Activated CD4-positive, alpha-beta memory T cell treated with anti-CD3 and anti-CD28 coated beads for 36 hours (primary cell): ENCODE measurements at regions of chr14 and their contacts with region 1.

Region 1: DNA sequence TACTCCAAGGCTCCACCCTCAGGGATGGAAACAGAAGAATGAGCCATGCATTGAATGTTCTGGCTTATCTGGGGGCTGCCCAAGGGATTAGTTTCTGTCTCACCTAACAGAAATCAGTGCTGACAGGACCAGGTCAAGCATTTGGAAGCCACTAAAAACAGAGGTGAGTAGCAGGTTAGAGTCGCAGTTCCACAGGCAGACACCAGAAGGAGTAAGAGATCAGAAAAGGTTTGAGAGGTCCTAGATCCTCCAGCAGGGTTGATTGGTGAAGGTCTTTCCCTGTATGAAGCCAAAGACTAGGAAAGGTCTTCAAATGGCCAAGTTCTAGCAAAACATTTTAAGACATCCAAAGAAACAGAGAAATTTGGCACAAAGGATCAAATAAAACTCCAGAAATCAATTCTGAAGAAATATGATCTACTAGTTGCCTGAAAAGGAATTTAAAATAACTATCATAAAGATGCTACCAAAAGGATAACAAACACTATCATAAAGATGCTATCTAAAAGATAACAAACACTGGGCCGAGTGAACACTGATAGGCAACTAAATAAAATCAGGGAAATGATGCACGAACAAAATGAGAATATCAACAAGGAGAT is 19.5 kb upstream of the TTC9 start:
- DNase-seq: peak; percentile 61
- H3K4me3 Mint-ChIP-seq: no peak overlapping the region
- H3K27ac Mint-ChIP-seq: no peak overlapping the region
- H3K4me1 Mint-ChIP-seq: no peaks in the 10 kb centered on the region
- H3K27me3 Mint-ChIP-seq: no peaks in the 10 kb centered on the region

Region 2: DNA sequence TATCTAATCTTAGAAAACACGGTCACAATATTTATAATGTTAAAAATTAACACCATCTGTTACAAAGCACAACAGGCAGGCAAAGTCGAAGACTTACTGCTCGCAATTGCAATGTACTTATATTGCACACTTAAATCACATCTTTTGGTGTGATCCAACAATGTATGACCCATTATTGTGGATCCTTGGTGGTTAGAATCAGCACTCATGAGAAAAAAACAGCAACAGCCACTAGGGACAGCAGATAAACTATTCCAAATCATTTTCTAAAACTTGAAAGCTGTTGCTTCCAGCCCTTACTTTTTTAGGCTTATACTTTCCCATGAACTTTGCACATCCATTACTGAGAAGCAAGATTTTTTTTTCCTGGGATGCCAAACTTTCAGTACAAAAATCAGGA is 283.2 kb before region 1 on chr14:
- CTCF ChIA-PET with region 1: no interaction called
- POLR2A ChIA-PET with region 1: no interaction called
- intact Hi-C with region 1: no loop called
- DNase-seq: no peak
- H3K4me3 Mint-ChIP-seq: no peak overlapping the region
- H3K27ac Mint-ChIP-seq: no peak overlapping the region
- H3K4me1 Mint-ChIP-seq: peaks cover 12% of the 10 kb centered on the region
- H3K27me3 Mint-ChIP-seq: no peaks in the 10 kb centered on the region

Region 3: DNA sequence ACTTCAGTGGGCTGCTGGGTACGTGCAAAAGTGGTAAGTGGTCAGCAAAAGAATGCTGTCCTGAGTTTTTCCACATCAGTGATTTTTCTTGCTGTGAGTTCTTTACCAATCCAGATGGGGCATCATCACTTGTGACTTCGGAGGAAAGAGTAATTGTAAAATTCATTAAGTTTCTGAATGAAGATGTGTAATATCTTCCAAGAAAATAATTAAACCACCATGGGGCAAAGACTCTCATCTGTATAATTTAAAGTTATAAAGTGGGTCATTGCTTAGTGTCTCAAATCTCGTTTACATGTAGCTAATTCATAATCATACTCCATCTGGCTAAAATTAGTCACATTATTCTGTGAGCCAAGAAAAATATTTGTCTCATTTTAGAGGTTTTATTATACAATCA is 11.0 kb before region 1 on chr14:
- CTCF ChIA-PET with region 1: no interaction called
- POLR2A ChIA-PET with region 1: no interaction called
- intact Hi-C with region 1: no loop called
- DNase-seq: no peak
- H3K4me3 Mint-ChIP-seq: no peak overlapping the region
- H3K27ac Mint-ChIP-seq: no peak overlapping the region
- H3K4me1 Mint-ChIP-seq: no peaks in the 10 kb centered on the region
- H3K27me3 Mint-ChIP-seq: peaks cover 7% of the 10 kb centered on the region

Region 4: GRCh38 chr14:70705664-70706063 is 83.5 kb after region 1 on chr14:
- CTCF ChIA-PET with region 1: interaction called, 5 read pairs
- POLR2A ChIA-PET with region 1: no interaction called
- intact Hi-C with region 1: loop called (anchors 2 kb)
- DNase-seq: no peak
- H3K4me3 Mint-ChIP-seq: no peak overlapping the region
- H3K27ac Mint-ChIP-seq: no peak overlapping the region
- H3K4me1 Mint-ChIP-seq: peaks cover 2% of the 10 kb centered on the region
- H3K27me3 Mint-ChIP-seq: no peaks in the 10 kb centered on the region